ENCODE measurements at regions of chr1 and their contacts with region 1.

Region 1: DNA sequence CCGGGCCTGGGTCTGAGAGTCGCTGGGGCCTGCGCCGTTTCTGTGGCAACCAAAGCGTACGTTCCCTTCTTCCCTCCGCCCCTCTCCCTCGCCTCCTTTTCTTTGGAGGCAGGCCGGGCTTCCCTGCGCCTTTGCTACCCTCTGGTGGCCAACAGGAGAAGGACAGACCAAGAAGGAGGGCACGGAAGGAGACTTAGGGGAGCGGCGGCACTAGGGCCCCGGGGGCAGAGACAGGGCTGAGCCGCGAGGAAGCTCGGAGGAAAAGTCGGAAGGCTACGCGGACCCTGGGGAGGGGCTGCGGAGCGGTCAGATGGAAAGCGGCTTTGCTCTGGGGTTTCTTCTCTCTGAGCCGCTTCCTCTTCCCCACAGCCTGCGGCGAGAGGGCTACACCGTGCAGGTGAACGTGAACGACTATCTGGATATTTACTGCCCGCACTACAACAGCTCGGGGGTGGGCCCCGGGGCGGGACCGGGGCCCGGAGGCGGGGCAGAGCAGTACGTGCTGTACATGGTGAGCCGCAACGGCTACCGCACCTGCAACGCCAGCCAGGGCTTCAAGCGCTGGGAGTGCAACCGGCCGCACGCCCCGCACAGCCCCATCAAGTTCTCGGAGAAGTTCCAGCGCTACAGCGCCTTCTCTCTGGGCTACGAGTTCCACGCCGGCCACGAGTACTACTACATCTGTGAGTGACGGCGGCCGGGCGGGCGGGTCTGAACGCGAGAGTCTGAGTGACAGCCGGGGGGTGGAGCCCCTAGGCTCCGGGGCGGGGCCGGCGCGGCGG is 6.3 kb downstream of the EFNA3 start:
- DNase-seq: peak; percentile 86 to 95 (median 90)
- H3K4me3 ChIP-seq: peak overlapping the region; percentile 99
- H3K4me3 Mint-ChIP-seq: peak overlapping the region; percentile 86 to 98 (median 92)
- H3K27ac ChIP-seq: peak overlapping the region; percentile 71
- H3K27ac Mint-ChIP-seq: peak overlapping the region; percentile 80 to 97 (median 94)
- H3K4me1 ChIP-seq: peaks cover 57% of the 10 kb centered on the region
- H3K4me1 Mint-ChIP-seq: peaks cover 33 to 51% (median 36%) of the 10 kb centered on the region in 3 donors
- H3K27me3 ChIP-seq: peaks cover 40% of the 10 kb centered on the region
- H3K27me3 Mint-ChIP-seq: peaks cover 34 to 36% of the 10 kb centered on the region in 2 donors

Region 2: GRCh38 chr1:154906621-154907081 is 178.3 kb before region 1 on chr1:
- CTCF ChIA-PET with region 1: no interaction called
- POLR2A ChIA-PET with region 1: no interaction called
- DNase-seq: no peak
- H3K4me3 ChIP-seq: no peak overlapping the region
- H3K4me3 Mint-ChIP-seq: no peak overlapping the region
- H3K27ac ChIP-seq: no peak overlapping the region
- H3K27ac Mint-ChIP-seq: no peak overlapping the region
- H3K4me1 ChIP-seq: no peaks in the 10 kb centered on the region
- H3K4me1 Mint-ChIP-seq: no peaks in the 10 kb centered on the region
- H3K27me3 ChIP-seq: no peaks in the 10 kb centered on the region
- H3K27me3 Mint-ChIP-seq: no peaks in the 10 kb centered on the region

Region 3: DNA sequence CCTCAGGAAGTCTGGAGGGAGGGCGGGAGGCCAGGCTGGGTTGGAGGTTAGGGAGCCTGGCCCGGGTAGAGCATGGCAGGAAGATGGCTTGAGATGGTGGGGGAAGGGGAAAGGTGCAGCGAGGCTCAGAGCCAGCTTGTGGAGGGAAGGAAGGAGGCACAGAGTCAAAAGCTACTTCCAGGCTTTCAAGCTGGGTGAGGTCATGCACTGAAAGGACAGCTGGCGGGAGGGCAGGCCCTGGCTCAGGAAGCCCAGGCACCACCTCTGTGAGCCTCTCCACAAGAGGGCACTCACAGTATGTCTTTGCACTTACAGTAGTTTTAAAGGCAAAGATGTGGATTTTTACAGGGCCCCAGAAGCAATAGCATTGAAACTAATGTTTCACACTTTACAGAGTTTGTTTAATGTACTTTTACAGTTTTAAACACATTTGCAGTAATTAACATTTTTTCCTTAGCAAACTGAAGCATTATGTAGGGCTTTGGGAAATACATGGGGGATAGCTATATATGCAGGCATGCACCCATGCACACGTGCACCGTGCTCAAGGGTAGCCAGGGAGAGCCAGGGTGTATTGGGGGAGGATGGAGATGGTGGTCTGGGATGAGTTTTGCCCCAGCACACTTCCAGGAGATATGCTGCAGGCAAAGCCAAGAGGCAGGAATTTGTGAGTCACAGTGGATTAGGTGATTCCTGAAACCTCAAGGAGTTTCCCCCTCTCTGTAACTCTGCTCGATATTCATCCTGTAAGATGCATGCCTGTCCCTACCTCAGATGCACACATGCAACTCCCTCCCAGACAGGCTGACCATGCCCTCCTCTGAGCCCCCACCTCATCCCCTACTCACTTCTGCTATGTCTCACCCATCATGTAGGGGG is 39.9 kb before region 1 on chr1:
- CTCF ChIA-PET with region 1: interaction called, 47 read pairs
- POLR2A ChIA-PET with region 1: interaction called, 6 read pairs
- DNase-seq: peak; percentile 34 to 75 (median 57)
- H3K4me3 ChIP-seq: no peak overlapping the region
- H3K4me3 Mint-ChIP-seq: peak overlapping the region in 1 of 7 donors; percentile 49
- H3K27ac ChIP-seq: no peak overlapping the region
- H3K27ac Mint-ChIP-seq: no peak overlapping the region
- H3K4me1 ChIP-seq: peaks cover under 1% of the 10 kb centered on the region
- H3K4me1 Mint-ChIP-seq: peaks cover 5 to 11% (median 6%) of the 10 kb centered on the region in 3 donors
- H3K27me3 ChIP-seq: no peaks in the 10 kb centered on the region
- H3K27me3 Mint-ChIP-seq: peaks cover 3 to 4% of the 10 kb centered on the region in 2 donors

Region 4: DNA sequence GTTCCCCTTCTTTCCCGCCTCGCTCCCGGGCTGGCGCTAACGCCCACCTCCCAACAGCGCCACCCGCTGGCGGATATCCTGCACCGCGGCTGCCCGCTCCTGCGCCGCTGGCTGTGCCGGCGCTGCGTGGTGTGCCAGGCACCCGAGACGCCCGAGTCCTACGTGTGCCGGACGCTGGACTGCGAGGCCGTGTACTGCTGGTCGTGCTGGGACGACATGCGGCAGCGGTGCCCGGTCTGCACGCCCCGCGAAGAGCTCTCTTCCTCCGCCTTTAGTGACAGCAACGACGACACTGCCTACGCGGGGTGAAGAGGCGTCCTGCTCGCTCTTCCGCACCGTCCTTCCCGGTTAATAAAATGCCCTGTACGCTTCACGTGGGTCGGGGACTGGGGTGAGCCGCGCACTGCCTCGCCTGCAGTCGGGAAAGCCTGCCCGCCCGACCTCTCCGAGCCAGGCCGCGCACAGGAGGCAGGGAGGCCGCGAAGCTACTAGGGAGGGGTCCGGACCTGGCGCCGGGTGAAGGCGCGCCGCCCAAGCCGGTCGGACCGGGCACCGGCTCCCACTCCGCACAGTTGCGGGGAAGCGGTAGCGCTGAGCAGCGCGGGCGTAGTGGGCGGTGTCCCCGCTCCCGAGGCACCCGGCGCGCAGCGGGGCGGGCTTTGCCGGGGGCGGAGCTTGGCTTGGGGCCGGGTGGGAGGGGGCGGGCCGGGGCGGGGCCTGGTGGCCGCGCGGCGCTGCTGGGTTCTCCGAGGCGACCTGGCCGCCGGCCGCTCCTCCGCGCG is 34.2 kb before region 1 on chr1 and contains the start of gene ADAM15:
- CTCF ChIA-PET with region 1: interaction called, 107 read pairs
- POLR2A ChIA-PET with region 1: no interaction called
- DNase-seq: peak; percentile 73 to 82 (median 77)
- H3K4me3 ChIP-seq: peak within 1 kb of the TSS; percentile 67
- H3K4me3 Mint-ChIP-seq: peak within 1 kb of the TSS; percentile 84 to 90 (median 86)
- H3K27ac ChIP-seq: peak within 1 kb of the TSS; percentile 46
- H3K27ac Mint-ChIP-seq: peak within 1 kb of the TSS; percentile 50 to 96 (median 68)
- H3K4me1 ChIP-seq: peaks cover 21% of the 10 kb centered on the region
- H3K4me1 Mint-ChIP-seq: peaks cover 23 to 33% (median 23%) of the 10 kb centered on the region in 3 donors
- H3K27me3 ChIP-seq: no peaks in the 10 kb centered on the region
- H3K27me3 Mint-ChIP-seq: peaks cover 0 to 1% of the 10 kb centered on the region in 2 donors
- total RNA-seq, gene ADAM15: 34.5 to 36.9 TPM

Region 5: DNA sequence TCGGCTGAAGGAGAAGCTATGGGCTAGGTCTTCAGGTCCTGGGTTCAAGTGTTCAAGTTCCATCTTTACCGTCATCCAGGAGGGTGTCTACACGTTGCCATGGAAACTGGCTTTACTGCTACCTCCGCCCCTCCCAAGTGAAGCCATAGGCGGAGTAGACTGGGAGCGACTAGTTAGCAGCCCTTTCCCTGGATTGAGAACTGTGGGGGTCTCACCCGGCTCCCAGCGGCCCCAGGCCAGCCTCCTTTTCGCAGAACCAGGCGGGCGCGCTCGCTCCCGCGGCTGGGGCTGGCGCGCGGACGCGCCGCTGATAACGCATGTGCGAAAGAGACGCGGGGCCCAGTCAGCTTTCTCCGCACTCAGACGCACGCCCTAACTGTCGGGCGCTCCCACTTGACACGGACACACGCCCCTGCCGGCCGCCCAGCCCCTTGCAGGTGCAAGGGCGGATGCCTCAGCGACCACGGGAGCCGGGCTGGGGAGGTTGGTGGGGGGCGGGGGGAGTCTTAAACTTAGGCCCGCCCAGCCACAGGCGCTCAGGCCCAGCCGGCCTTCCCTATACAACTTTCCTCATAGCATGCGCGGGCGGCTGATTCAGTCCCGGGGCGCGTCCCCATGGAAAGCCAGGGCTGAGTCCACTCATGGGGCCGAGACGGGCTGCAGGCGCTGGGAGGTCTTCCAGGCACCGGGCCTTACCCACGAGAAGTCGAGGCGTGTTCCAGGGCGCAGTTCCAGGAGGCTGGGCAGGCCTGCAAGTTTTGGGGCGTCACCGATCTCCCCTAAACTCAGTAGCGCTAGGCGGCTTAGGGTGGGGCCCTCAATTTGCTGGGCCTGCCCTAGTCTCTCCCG is 14.0 kb before region 1 on chr1:
- CTCF ChIA-PET with region 1: interaction called, 46 read pairs
- POLR2A ChIA-PET with region 1: interaction called, 4 read pairs
- DNase-seq: peak; percentile 57 to 87 (median 76)
- H3K4me3 ChIP-seq: peak overlapping the region; percentile 74
- H3K4me3 Mint-ChIP-seq: peak overlapping the region; percentile 23 to 68 (median 37)
- H3K27ac ChIP-seq: peak overlapping the region; percentile 43
- H3K27ac Mint-ChIP-seq: peak overlapping the region in 2 of 8 donors; percentile 32 to 43
- H3K4me1 ChIP-seq: peaks cover 20% of the 10 kb centered on the region
- H3K4me1 Mint-ChIP-seq: peaks cover 14 to 41% (median 28%) of the 10 kb centered on the region in 3 donors
- H3K27me3 ChIP-seq: no peaks in the 10 kb centered on the region
- H3K27me3 Mint-ChIP-seq: no peaks in the 10 kb centered on the region

Region 6: DNA sequence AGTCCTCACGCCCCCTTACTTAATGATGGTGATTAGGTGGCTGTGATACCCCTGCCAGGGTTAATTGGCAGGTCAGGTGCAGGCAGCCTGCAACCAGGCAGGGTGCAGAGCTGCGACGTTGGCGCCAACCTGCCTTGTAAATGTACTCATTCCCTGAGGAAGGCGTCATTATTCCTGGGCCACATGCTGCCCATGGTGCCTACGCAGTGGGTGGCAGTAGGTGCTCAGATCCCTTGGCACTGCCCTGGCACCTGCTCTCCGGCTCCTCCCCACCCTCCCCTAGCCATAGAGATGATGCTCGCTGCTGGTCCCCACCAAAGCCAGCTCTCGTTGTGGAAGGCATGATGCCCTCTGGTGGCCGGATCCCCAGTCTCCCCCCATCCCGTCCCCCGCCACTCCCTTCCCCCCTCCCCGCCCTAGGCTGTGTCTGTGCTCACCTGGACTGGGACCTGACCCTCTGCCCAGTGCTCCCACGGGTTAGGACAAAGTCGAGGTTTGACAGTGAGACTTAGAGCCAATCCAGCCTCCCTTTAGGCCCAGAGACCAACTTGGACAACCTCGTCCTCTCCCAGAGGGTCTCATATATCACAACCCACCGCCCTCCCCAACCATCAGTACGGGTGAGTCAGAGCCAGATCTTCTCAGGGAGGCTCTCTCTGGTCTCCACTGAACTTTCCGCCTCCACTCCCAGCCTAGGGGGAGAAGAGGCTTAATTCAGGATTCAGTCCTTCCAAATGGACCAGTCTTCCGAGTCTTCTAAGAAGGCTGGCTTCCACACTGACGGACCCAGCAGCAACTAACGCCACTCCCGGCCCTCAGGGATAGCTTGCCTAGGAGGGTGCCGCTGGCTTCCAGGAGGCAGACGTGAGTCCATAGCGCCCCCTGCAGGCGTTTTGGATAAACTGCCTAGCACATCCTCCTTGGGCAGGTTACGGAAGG is 82.5 kb after region 1 on chr1:
- CTCF ChIA-PET with region 1: interaction called, 177 read pairs
- POLR2A ChIA-PET with region 1: no interaction called
- DNase-seq: peak; percentile 73 to 88 (median 80)
- H3K4me3 ChIP-seq: peak overlapping the region; percentile 30
- H3K4me3 Mint-ChIP-seq: peak overlapping the region; percentile 31 to 71 (median 48)
- H3K27ac ChIP-seq: no peak overlapping the region
- H3K27ac Mint-ChIP-seq: peak overlapping the region in 4 of 8 donors; percentile 5 to 55 (median 28)
- H3K4me1 ChIP-seq: peaks cover 18% of the 10 kb centered on the region
- H3K4me1 Mint-ChIP-seq: peaks cover 17 to 30% (median 20%) of the 10 kb centered on the region in 3 donors
- H3K27me3 ChIP-seq: no peaks in the 10 kb centered on the region
- H3K27me3 Mint-ChIP-seq: peaks cover 2 to 3% of the 10 kb centered on the region in 2 donors

Region 7: GRCh38 chr1:155479205-155479604 is 394.3 kb after region 1 on chr1:
- CTCF ChIA-PET with region 1: no interaction called
- POLR2A ChIA-PET with region 1: no interaction called
- DNase-seq: no peak
- H3K4me3 ChIP-seq: no peak overlapping the region
- H3K4me3 Mint-ChIP-seq: peak overlapping the region in 1 of 7 donors; percentile 7
- H3K27ac ChIP-seq: no peak overlapping the region
- H3K27ac Mint-ChIP-seq: peak overlapping the region in 2 of 8 donors; percentile 17 to 43
- H3K4me1 ChIP-seq: no peaks in the 10 kb centered on the region
- H3K4me1 Mint-ChIP-seq: peaks cover 15 to 30% (median 20%) of the 10 kb centered on the region in 3 donors
- H3K27me3 ChIP-seq: no peaks in the 10 kb centered on the region
- H3K27me3 Mint-ChIP-seq: no peaks in the 10 kb centered on the region

Measured in CD8-positive, alpha-beta memory T cell (primary cell).